ENCODE measurements at regions of chr14 and their contacts with region 1.

Region 1: DNA sequence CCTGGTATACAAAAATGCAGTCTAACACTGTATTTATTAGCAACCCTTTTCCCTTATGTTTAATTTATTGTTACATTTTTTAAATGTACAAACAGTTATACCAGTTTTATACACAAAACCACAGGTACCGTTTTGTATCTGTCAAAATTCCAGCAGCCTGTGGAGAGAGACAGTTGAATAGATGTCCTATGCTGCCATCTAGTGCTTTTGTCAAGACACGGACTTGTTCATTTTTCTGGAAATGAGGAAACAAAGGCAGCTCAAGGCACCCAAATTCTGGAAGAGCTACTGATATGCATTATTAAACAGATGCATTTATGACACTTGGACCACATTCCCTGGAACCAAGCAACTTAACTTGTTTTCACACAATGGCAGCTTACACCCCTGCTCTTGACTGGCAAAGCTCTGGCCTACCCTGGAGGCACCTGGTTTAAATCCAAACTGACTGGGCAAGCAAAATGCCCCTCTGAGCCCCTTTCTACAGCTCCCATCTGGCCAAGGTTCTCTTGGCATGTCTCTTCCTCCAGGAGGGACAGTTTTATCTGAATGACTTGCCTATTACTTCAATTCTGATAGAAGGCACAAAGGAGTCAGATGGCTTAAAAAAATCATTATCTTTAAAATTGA is 286.9 kb upstream of the PRKD1 start:
- DNase-seq: no peak

Region 2: DNA sequence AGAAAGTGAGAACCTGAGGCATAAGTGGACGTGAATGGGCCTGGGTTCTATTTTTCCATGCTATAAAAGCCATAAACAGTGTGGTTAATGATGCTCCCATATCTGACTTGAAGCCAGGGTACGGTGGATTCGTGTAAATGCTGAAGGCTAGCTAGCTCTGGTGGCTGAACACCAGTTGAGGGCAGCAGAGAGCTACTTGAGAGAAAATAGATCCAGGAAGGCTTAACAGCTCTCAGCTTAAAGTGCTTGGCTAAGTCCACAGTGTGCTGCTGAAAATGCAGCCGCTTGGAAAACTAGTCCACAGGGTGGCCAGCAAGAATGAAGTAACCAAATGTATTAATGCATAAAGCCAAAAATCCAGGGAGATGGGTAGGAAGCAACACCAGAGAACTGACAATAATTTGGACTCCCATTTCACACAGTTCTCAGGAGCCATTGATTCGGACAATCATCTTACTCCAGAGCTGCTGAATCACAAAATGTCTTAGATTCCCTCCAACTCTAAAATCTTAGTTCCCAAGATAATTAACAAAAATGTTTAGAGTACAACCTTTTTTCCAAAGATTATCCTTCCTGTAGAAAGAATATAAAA is 1463.0 kb before region 1 on chr14:
- intact Hi-C with region 1: loop called (anchors 10 kb)
- DNase-seq: no peak

Region 3: DNA sequence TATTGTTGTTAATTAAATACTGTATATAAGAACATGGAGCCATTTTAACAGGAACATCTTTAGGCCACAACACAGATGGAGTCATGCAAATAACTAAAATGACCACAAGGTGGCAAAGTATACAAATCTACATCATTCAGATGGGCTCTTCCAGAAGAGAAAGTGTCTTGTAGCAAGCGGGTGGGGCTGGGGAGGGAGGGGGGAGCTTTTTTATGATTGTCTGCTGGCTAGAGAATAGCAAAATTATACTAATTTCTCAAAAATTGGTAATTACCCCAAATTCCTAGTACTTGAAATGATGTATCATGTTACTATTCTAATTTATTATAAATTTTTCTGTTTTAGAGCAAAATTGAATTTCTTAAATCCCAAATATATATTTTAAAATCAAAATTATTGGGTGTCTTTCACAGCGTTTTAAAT is 665.6 kb before region 1 on chr14:
- intact Hi-C with region 1: loop called (anchors 5 kb)
- DNase-seq: no peak

Region 4: GRCh38 chr14:30015489-30015888 is 199.1 kb before region 1 on chr14:
- intact Hi-C with region 1: loop called (anchors 10 kb)
- DNase-seq: no peak

Measured in cardiac septum (tissue), 1 donor.